Caco-2 (cell line): ENCODE measurements at regions of chr2 and their contacts with region 1.

Region 1: GRCh38 chr2:132267105-132267497 is 105.3 kb upstream of the ANKRD30BL start:
- DNase-seq: no peak
- H3K4me3 ChIP-seq: no peak overlapping the region
- H3K4me3 Mint-ChIP-seq: no peak overlapping the region
- H3K27ac Mint-ChIP-seq: no peak overlapping the region
- H3K4me1 ChIP-seq: peaks cover 10% of the 10 kb centered on the region
- H3K4me1 Mint-ChIP-seq: no peaks in the 10 kb centered on the region
- H3K27me3 ChIP-seq: no peaks in the 10 kb centered on the region
- H3K27me3 Mint-ChIP-seq: no peaks in the 10 kb centered on the region
- CTCF ChIP-seq: no peak

Region 2: DNA sequence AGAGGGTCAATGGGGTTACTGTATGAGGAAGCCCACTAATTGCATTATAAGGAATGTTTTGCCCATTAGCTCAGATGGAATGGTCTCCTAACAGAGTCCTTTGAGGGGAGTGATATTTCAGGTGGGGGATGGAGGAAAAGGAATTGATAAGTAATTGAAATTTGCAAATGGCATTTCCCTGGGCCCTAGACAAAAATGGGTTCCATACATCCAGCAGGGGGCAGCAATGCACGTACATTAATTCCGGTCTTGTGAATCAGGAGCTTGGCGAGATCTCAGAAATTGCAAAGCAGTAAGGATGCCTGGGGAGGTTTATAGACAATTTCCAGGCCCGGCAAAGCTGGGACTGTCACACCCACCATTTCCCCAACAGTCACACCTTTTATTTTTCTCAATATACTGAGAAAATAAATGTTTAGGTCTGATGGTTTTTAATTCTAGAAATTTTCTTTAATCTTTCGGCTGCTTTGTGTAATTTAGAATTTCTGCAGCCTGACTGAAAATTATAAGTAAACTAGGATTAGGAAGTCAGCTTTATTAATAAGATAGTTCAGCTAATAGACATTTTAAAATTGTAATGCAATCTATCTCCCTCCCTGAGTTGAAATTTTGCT is 280.1 kb after region 1 on chr2:
- CTCF ChIA-PET with region 1: no interaction called
- POLR2A ChIA-PET with region 1: no interaction called
- intact Hi-C with region 1: no loop called
- DNase-seq: peak; percentile 66 to 74
- H3K4me3 ChIP-seq: no peak overlapping the region
- H3K4me3 Mint-ChIP-seq: no peak overlapping the region
- H3K27ac Mint-ChIP-seq: no peak overlapping the region
- H3K4me1 ChIP-seq: peaks cover 16% of the 10 kb centered on the region
- H3K4me1 Mint-ChIP-seq: peaks cover 16% of the 10 kb centered on the region
- H3K27me3 ChIP-seq: no peaks in the 10 kb centered on the region
- H3K27me3 Mint-ChIP-seq: no peaks in the 10 kb centered on the region
- CTCF ChIP-seq: peak; percentile 65 to 76

Region 3: DNA sequence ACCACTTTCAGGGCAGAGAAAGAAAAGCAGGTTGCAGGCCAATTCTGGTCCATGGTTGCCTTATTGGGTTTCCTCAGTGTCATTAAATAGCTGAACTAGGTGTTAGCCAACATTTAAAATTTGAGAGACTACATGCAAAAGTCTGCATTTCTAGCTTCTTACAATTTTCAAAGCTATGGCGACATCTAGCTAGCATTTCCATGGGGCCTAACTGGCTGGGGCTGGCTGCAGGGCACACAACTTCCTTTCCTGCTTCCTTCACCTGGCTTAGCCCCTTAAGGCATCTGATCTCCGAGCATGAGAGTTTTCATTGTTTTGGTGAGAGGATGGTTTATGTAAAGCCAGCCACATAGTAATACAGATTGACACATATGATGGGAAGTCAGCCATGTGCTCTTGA is 586.0 kb after region 1 on chr2:
- CTCF ChIA-PET with region 1: no interaction called
- POLR2A ChIA-PET with region 1: no interaction called
- intact Hi-C with region 1: loop called (anchors 5 kb)
- DNase-seq: no peak
- H3K4me3 ChIP-seq: no peak overlapping the region
- H3K4me3 Mint-ChIP-seq: no peak overlapping the region
- H3K27ac Mint-ChIP-seq: no peak overlapping the region
- H3K4me1 ChIP-seq: no peaks in the 10 kb centered on the region
- H3K4me1 Mint-ChIP-seq: no peaks in the 10 kb centered on the region
- H3K27me3 ChIP-seq: no peaks in the 10 kb centered on the region
- H3K27me3 Mint-ChIP-seq: no peaks in the 10 kb centered on the region
- CTCF ChIP-seq: peak in 1 of 2 experiments; percentile 13

Region 4: DNA sequence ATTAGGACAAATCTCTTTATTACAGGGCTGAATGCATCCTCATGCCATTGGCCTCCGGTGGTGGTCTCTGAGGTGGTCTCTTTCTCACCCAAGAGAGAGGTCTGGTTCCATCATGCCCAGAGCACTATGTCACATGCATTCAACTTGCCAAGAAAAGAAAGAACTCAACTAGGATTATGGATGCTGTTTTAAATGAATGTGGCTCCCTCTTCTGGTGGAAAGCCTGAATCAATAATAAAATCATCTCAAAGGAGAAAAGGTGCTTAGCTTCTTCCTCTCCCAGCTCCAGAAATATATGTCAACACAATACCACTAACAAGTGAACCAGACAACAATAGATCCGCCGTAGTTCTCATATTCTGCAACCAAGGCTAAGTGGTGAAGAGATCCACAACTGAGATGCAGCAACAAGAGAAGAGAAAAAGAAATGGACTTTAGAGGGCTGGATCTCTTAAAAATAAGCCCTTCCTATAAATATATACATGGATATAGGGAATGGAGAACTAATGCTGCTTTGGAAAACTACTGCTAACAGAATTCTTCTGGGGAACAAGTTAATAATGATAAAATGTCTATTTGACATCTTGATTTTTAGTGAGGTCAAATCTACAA is 904.4 kb after region 1 on chr2:
- CTCF ChIA-PET with region 1: interaction called, 6 read pairs
- POLR2A ChIA-PET with region 1: no interaction called
- intact Hi-C with region 1: loop called (anchors 1 kb)
- DNase-seq: peak in 1 of 2 experiments; percentile 59
- H3K4me3 ChIP-seq: no peak overlapping the region
- H3K4me3 Mint-ChIP-seq: no peak overlapping the region
- H3K27ac Mint-ChIP-seq: no peak overlapping the region
- H3K4me1 ChIP-seq: 0 out of 2 replicates have a peak, but pooled peaks cover 4% of the 10 kb centered on the region
- H3K4me1 Mint-ChIP-seq: no peaks in the 10 kb centered on the region
- H3K27me3 ChIP-seq: no peaks in the 10 kb centered on the region
- H3K27me3 Mint-ChIP-seq: no peaks in the 10 kb centered on the region
- CTCF ChIP-seq: peak; percentile 54 to 57